ENCODE measurements at regions of chr19 and their contacts with region 1.

Region 1: DNA sequence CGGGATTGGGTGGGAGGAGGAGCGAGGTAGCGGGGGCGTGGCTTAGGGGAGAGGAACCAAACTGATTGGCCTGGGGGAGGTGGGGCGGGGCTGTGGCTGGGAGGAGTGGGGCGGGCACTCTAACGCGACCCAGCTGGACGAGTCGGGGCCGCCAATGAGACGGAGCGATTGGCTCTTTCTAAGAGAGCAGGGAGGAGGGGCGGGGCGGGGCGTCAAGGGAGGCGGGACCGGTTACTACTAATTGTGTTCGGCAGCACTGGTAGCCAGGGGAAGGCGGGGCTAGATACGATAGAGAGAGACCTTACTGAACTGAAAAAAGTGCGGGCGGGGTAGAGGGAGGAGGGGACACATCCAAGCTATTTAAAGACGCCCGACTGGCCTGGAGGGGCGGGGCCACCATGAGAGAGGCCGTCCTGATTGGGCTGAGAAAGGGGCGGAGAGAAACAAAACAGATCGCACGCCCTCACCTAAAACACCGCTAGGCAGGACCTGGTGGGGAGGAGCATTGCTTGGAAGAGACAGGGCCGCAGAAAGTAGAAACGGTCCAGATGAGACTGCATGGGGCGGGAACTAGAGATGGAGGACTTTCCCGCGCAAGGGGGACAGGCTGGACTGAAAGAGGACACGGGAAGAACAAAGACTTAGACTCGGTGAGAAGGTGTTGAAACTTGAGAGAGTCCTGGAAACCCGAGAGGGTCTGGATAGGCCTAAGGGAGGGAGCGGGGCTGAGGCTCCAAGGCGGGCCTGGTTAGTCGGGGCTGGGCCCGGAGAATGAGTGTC is at the start of gene KCNC3:
- DNase-seq: peak; percentile 96
- H3K4me3 Mint-ChIP-seq: peak within 1 kb of the TSS; percentile 84
- H3K27ac Mint-ChIP-seq: peak within 1 kb of the TSS; percentile 89
- H3K4me1 Mint-ChIP-seq: peaks cover 72% of the 10 kb centered on the region
- H3K27me3 Mint-ChIP-seq: peaks cover 16% of the 10 kb centered on the region
- total RNA-seq, gene KCNC3: 23.7 and 24.0 TPM in 2 replicates

Region 2: DNA sequence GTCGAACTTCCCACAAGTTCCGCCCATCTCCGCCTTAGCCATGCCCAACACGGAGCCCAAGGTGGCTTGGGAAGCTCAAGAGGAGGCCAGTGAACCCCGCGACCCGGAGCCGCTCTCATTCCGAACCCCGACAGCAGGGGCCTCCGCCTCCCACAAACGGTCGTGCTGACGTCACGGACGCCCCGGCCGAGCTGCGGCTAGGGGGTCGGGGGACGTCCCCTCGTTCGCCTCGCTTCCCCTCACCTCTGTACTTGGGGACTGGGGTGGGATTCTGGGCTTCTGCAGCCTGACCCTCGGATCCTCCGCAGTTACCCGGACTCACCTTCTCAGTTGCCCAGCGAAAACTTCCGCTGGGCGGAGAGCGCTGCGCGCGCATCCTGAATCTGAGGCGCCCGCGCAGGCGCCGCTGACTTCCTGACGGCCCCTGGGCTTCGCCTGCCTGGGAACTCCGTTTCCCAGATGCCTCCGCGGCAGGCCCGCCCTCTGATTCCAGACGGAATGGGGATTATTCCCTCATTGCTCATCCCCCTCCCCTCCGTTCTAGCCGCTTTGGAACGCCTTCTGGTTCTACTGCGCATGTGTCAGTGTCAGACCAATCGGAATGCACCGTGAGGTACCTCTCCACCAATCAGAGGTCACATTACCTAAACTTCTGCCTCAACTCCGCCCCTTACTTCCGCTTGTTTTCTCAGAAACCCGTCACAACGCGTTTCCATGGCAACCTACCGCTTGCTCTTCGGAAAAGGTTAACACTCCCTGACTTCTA is 304.1 kb before region 1 on chr19 and contains the start of gene VRK3:
- intact Hi-C with region 1: loop called (anchors 1 kb)
- DNase-seq: peak; percentile 99
- H3K4me3 Mint-ChIP-seq: peak within 1 kb of the TSS; percentile 93
- H3K27ac Mint-ChIP-seq: peak within 1 kb of the TSS; percentile 99
- H3K4me1 Mint-ChIP-seq: peaks cover 40% of the 10 kb centered on the region
- H3K27me3 Mint-ChIP-seq: peaks cover 6% of the 10 kb centered on the region
- total RNA-seq, gene VRK3: 66.7 and 69.4 TPM in 2 replicates

Region 3: DNA sequence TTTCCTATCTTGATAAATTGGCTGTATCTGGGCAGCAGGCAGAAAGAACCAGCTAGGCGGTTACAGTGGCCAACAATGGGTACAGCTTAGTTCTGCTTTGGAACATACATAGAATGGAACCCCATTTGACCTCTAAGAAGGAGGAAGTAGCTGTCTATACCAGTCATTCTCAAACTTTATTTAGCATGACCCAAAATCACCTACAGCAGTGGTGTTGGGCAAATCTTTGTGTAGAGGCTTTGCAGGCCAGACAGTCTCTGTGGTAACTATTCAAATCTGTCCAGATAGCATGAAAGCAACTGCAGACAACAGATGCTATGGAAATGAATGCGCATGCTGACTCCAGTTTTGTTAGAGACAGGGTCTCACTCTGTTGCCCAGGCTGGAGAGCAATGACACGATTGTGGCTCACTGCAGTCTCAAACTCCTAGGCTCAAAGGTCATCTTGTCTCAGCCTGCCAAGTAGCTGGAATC is 11.8 kb after region 1 on chr19:
- intact Hi-C with region 1: loop called (anchors 2 kb)
- DNase-seq: no peak
- H3K4me3 Mint-ChIP-seq: no peak overlapping the region
- H3K27ac Mint-ChIP-seq: peak overlapping the region; percentile 48
- H3K4me1 Mint-ChIP-seq: peaks cover 29% of the 10 kb centered on the region
- H3K27me3 Mint-ChIP-seq: no peaks in the 10 kb centered on the region

Region 4: GRCh38 chr19:50368649-50369570 is 39.6 kb after region 1 on chr19:
- intact Hi-C with region 1: no loop called
- DNase-seq: peak; percentile 73
- H3K4me3 Mint-ChIP-seq: peak overlapping the region; percentile 94
- H3K27ac Mint-ChIP-seq: peak overlapping the region; percentile 89
- H3K4me1 Mint-ChIP-seq: peaks cover 37% of the 10 kb centered on the region
- H3K27me3 Mint-ChIP-seq: no peaks in the 10 kb centered on the region

Region 5: GRCh38 chr19:50383852-50384684 is 54.7 kb after region 1 on chr19 and contains the start of gene POLD1:
- intact Hi-C with region 1: loop called (anchors 1 kb)
- DNase-seq: peak; percentile 99
- H3K4me3 Mint-ChIP-seq: peak within 1 kb of the TSS; percentile 91
- H3K27ac Mint-ChIP-seq: peak within 1 kb of the TSS; percentile 96
- H3K4me1 Mint-ChIP-seq: peaks cover 28% of the 10 kb centered on the region
- H3K27me3 Mint-ChIP-seq: no peaks in the 10 kb centered on the region
- total RNA-seq, gene POLD1: 171 and 178 TPM in 2 replicates

Region 6: GRCh38 chr19:50724522-50725217 is 395.3 kb after region 1 on chr19:
- intact Hi-C with region 1: loop called (anchors 1 kb)
- DNase-seq: peak; percentile 97
- H3K4me3 Mint-ChIP-seq: peak overlapping the region; percentile 85
- H3K27ac Mint-ChIP-seq: peak overlapping the region; percentile 78
- H3K4me1 Mint-ChIP-seq: no peaks in the 10 kb centered on the region
- H3K27me3 Mint-ChIP-seq: peaks cover 38% of the 10 kb centered on the region

Region 7: DNA sequence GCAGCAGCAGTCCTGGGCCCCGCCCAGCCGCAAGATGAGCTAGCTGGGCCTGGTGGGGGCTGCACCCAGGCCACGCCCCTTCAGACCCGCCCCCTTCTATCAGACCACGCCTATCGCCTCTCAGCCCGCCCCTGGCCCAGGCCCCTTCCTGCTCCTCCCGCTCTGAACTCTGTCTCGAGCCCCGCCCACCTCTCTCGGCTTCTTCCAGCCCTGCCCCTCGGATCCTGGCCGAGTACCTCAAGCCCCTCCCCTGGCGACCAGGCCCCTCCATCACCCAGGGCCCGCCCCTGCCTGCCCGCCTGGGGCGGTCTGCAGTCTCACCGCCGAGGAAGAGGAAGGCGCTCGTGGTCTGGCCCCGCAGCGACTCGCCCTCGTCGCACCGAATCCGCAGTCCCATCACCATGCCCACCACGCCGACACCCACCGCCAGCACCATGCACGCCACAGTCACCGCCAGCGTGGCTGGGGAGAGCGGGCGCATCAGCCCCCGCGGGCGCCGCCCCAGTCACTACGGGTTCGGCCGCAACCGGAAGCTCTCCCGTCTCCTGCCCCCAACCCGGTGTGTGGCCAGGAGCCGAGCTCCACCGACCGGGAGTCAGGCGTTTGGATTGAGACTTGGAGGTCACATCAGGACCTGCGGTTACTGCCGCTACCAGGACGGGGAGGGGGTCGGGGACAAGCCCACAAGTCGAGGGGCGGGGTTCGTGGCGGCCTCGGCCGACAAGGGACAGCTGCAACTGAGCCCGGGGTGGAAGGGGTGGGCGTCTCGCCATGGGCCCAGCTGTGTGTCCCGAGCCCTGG is 1038.4 kb after region 1 on chr19:
- intact Hi-C with region 1: loop called (anchors 2 kb)
- DNase-seq: peak; percentile 95
- H3K4me3 Mint-ChIP-seq: peak overlapping the region; percentile 98
- H3K27ac Mint-ChIP-seq: peak overlapping the region; percentile 96
- H3K4me1 Mint-ChIP-seq: peaks cover 68% of the 10 kb centered on the region
- H3K27me3 Mint-ChIP-seq: no peaks in the 10 kb centered on the region

Measured in activated T-helper 1 cell treated with anti-CD3 and anti-CD28 coated beads, Interleukin-12 subunit alpha, Interleukin-12 subunit beta, Interleukin-2, Interleukin-4 antibody, amounts not matched to agents 30 ng/mL and 10 ng/mL and 1 ng/mL, durations not matched to agents 14 hours and 24 hours and 36 hours (primary cell).